Activated CD4-positive, alpha-beta memory T cell treated with anti-CD3 and anti-CD28 coated beads for 36 hours (primary cell): ENCODE measurements at regions of chr1 and their contacts with region 1.

Region 1: DNA sequence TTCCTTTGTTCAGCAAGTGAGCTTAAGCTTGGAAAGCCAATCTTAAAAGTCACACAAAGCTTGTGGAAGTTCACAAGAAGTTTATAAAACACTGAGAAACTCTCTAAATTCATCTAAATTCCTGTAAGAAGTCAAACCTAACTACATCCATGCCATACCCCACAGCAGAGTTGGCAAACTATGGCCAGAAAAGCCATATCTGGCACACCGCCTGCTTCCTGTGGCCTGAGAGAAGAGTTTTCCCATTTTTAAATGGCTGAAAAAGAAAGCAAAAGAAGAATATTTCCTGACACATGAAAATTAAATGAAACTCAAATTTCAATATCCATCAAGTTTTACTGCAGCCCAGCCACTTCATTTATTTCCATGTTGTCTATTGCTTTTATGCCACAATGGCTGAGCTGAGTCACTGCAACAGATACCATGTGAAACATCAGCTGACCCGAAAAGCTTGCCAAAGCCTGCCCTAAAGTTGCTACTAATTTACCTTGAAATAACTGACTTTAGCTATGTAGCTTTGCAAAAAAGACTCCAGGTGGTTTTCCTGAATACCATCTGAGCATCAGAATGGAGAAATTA is 237.1 kb downstream of the SLC45A1 start:
- DNase-seq: peak; percentile 24
- H3K4me3 Mint-ChIP-seq: no peak overlapping the region
- H3K27ac Mint-ChIP-seq: peak overlapping the region; percentile 64
- H3K4me1 Mint-ChIP-seq: peaks cover 35% of the 10 kb centered on the region
- H3K27me3 Mint-ChIP-seq: no peaks in the 10 kb centered on the region

Region 2: DNA sequence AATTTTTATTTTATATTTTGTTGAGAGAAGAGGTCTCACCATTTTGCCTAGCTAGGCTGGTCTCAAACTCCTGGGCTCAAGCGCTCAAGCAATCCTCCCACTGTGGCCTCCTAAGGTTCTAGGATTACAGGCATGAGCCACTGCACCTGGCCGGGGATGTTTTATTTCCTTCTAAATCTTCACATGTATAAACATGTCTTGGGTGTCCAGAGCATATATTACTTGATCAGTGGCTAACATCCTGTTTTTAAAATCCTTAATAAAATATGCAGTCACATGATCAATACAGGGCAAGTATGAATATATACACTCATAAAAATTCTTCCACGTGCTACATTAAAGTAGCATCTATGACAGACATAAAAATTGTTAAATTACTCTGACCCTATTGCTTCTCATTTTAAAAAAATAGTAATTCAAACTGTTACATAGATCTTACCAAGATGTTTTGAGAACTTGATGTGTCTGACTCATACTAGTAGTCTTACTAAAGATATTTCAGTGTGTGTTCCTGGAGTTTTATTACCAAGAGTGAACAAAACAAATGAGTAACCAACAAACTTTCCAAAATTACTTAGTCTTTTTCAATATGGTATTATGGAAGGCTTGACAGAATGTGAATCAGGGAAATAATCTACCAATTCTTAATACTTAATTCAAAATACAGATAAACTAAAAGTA is 14.6 kb before region 1 on chr1:
- CTCF ChIA-PET with region 1: interaction called, 3 read pairs
- POLR2A ChIA-PET with region 1: no interaction called
- intact Hi-C with region 1: loop called (anchors 2 kb)
- DNase-seq: no peak
- H3K4me3 Mint-ChIP-seq: no peak overlapping the region
- H3K27ac Mint-ChIP-seq: peak overlapping the region; percentile 69
- H3K4me1 Mint-ChIP-seq: peaks cover 40% of the 10 kb centered on the region
- H3K27me3 Mint-ChIP-seq: no peaks in the 10 kb centered on the region

Region 3: DNA sequence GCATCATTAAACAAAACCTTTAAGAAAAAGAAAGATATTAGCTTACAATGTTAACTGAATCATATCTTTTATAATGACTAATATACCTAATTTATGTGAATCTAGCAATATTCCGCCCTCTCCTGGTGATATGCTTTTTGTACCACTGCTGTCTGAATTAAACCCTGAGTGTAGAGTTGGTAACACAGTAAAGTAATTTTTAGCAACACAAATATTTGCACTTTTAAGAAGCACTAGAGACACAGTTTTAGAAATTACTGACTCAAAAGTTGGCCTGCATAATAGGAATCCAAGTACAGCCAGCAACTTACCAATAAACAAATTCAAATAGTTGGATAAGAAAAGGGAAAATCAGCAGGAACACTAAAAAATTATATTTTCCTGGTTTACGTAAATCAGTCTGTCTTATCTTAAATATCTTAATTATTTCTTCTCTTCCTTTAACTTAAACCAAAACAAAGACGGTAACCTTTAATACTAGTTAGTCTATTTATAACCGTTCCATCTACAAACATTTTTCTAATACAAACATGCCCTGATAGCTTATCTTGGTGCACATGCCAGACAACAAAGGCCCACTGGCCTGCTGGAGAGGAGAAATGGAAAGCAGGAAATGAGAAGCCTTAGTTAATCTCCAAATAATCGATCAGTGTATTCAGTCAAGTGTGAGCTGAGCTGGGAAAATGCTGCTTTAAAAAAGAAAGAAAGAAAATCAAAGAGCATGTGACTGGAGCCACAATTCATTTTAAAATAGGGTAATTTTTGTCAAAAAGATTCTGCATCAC is 16.3 kb after region 1 on chr1:
- CTCF ChIA-PET with region 1: no interaction called
- POLR2A ChIA-PET with region 1: no interaction called
- intact Hi-C with region 1: no loop called
- DNase-seq: no peak
- H3K4me3 Mint-ChIP-seq: no peak overlapping the region
- H3K27ac Mint-ChIP-seq: no peak overlapping the region
- H3K4me1 Mint-ChIP-seq: no peaks in the 10 kb centered on the region
- H3K27me3 Mint-ChIP-seq: no peaks in the 10 kb centered on the region